ENCODE measurements at regions of chr1 and their contacts with region 1.

Region 1: GRCh38 chr1:40338745-40339424 is 21.8 kb upstream of the COL9A2 start:
- DNase-seq: peak; percentile 92
- H3K4me3 Mint-ChIP-seq: peak overlapping the region; percentile 17
- H3K27ac Mint-ChIP-seq: peak overlapping the region; percentile 24
- H3K4me1 Mint-ChIP-seq: peaks cover 49% of the 10 kb centered on the region
- H3K27me3 Mint-ChIP-seq: no peaks in the 10 kb centered on the region

Region 2: GRCh38 chr1:40072142-40072541 is 266.7 kb before region 1 on chr1:
- CTCF ChIA-PET with region 1: interaction called, 18 read pairs
- POLR2A ChIA-PET with region 1: interaction called, 5 read pairs
- DNase-seq: no peak
- H3K4me3 Mint-ChIP-seq: no peak overlapping the region
- H3K27ac Mint-ChIP-seq: no peak overlapping the region
- H3K4me1 Mint-ChIP-seq: peaks cover 8% of the 10 kb centered on the region
- H3K27me3 Mint-ChIP-seq: no peaks in the 10 kb centered on the region

Region 3: GRCh38 chr1:40092706-40093639 is 245.9 kb before region 1 on chr1:
- CTCF ChIA-PET with region 1: interaction called, 16 read pairs
- POLR2A ChIA-PET with region 1: no interaction called
- DNase-seq: no peak
- H3K4me3 Mint-ChIP-seq: no peak overlapping the region
- H3K27ac Mint-ChIP-seq: no peak overlapping the region
- H3K4me1 Mint-ChIP-seq: peaks cover 42% of the 10 kb centered on the region
- H3K27me3 Mint-ChIP-seq: no peaks in the 10 kb centered on the region

Region 4: DNA sequence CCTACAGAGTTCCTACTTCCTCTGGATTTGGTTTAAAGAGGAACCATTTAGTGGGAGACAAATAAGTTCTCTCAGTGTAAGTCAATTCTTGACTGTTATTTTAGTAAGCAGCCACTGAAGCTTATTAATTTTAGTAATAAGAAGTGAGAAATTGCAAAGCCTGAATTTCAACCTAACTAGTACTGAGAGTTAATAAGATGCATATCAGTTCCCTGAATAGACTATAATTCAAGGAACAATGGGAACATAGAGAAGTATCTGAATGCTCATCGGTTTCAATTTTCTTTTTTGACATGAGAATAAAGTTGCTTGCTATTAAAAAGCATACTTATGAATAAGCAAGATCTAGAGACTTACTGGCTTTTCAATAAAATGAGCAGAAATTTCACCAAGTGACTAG is 233.9 kb before region 1 on chr1:
- CTCF ChIA-PET with region 1: no interaction called
- POLR2A ChIA-PET with region 1: no interaction called
- DNase-seq: no peak
- H3K4me3 Mint-ChIP-seq: no peak overlapping the region
- H3K27ac Mint-ChIP-seq: no peak overlapping the region
- H3K4me1 Mint-ChIP-seq: peaks cover 3% of the 10 kb centered on the region
- H3K27me3 Mint-ChIP-seq: peaks cover 11% of the 10 kb centered on the region

Region 5: GRCh38 chr1:40153073-40153770 is 185.7 kb before region 1 on chr1:
- CTCF ChIA-PET with region 1: interaction called, 217 read pairs
- POLR2A ChIA-PET with region 1: interaction called, 18 read pairs
- DNase-seq: peak; percentile 37
- H3K4me3 Mint-ChIP-seq: no peak overlapping the region
- H3K27ac Mint-ChIP-seq: no peak overlapping the region
- H3K4me1 Mint-ChIP-seq: peaks cover 6% of the 10 kb centered on the region
- H3K27me3 Mint-ChIP-seq: peaks cover 5% of the 10 kb centered on the region

Region 6: GRCh38 chr1:40291293-40291692 is 47.6 kb before region 1 on chr1:
- CTCF ChIA-PET with region 1: interaction called, 11 read pairs
- POLR2A ChIA-PET with region 1: no interaction called
- DNase-seq: no peak
- H3K4me3 Mint-ChIP-seq: no peak overlapping the region
- H3K27ac Mint-ChIP-seq: no peak overlapping the region
- H3K4me1 Mint-ChIP-seq: peaks cover 12% of the 10 kb centered on the region
- H3K27me3 Mint-ChIP-seq: no peaks in the 10 kb centered on the region

Region 7: GRCh38 chr1:40352126-40352525 is 13.2 kb after region 1 on chr1:
- CTCF ChIA-PET with region 1: interaction called, 10 read pairs
- POLR2A ChIA-PET with region 1: interaction called, 3 read pairs
- DNase-seq: no peak
- H3K4me3 Mint-ChIP-seq: no peak overlapping the region
- H3K27ac Mint-ChIP-seq: no peak overlapping the region
- H3K4me1 Mint-ChIP-seq: no peaks in the 10 kb centered on the region
- H3K27me3 Mint-ChIP-seq: no peaks in the 10 kb centered on the region

Region 8: DNA sequence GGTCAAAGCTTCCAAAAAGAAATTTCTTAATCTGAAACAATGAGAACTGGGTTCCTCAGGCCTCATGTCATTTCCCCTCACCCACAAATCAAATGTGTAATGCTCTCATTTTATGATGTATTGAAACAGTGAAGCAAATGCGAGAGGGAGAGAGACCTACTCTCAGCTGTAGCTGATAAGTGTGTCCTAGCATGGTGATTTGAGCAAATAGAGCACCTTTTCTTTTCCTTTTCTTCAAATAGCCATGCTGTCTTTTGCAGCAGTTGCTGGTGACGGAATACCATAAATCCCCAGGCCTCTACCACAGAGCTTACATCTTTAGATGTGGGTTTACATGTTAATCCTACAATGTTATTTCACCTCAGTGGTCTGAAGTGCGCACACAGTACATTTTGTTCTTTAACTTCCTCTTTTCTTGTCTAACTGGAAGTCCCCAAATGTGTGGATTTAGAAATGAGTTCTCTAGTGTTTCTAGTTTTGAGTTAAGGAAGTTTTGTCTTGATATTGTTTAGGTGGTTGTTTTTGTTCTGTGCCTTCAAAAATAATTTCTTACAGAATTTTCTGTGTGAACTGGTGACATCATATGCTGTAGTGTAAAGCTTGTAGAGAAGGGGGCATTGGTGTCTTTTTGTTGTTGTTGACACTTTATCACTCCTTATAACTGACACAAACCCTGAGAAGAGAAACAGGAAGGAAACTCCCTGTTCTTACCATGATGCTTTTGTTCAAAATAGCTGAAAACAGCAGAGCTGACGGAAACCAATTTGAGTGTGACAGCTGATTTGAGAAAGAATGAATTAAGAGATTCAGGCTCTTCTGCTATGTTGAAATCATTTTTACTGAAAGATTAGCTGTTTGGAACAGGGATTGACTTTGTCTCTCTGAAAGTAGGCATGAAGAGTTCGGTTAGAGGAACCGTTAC is 46.8 kb after region 1 on chr1:
- CTCF ChIA-PET with region 1: interaction called, 12 read pairs
- POLR2A ChIA-PET with region 1: interaction called, 96 read pairs
- DNase-seq: peak; percentile 59
- H3K4me3 Mint-ChIP-seq: peak overlapping the region; percentile 70
- H3K27ac Mint-ChIP-seq: peak overlapping the region; percentile 99
- H3K4me1 Mint-ChIP-seq: peaks cover 91% of the 10 kb centered on the region
- H3K27me3 Mint-ChIP-seq: no peaks in the 10 kb centered on the region